T-cell (primary cell): ENCODE measurements at regions of chr7 and their contacts with region 1.

Region 1: DNA sequence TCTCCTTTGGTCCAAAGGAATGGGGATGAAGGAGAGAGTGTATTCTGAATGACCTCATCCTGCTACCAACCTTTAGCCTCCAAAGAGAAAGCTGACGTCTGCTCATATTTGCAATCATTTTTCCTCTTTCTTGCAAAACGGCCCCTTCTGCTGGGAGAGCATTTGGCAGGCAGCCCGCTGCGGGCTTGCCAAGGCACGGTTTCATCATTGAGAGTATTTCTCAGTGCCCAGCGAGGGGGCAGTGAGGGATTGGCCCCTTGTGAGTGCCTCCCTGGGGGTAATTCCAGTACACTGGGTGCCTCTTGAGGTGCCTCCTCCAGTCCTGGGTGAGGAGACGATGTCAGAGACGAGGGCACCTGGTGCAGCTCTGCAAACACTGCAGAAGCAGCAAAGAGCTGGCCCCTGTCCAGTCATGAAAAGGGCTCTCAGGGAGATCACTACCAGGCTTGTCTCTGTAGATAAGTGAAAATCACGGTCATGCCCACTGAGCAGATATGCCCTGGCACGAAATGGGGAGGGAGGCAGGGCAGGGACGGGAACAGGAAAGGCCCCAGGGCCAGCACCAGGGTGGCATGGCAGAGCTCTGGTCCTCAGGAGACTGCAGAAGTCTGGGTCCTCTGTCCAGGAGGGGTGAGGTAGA is 48.7 kb upstream of the SHH start:
- DNase-seq: no peak
- ATAC-seq: no peak
- H3K4me3 ChIP-seq: no peak overlapping the region
- H3K4me3 Mint-ChIP-seq: no peak overlapping the region
- H3K27ac ChIP-seq: no peak overlapping the region
- H3K27ac Mint-ChIP-seq: no peak overlapping the region
- H3K4me1 ChIP-seq: no peaks in the 10 kb centered on the region
- H3K4me1 Mint-ChIP-seq: no peaks in the 10 kb centered on the region
- H3K27me3 ChIP-seq: peaks cover 2 to 40% of the 10 kb centered on the region in 2 experiments
- H3K27me3 Mint-ChIP-seq: peaks cover 8 to 19% of the 10 kb centered on the region in 2 donors

Region 2: GRCh38 chr7:155802906-155803417 is 58.0 kb before region 1 on chr7:
- CTCF ChIA-PET with region 1: no interaction called
- POLR2A ChIA-PET with region 1: interaction called in 1 of 2 experiments, 12 read pairs
- DNase-seq: no peak
- ATAC-seq: no peak
- H3K4me3 ChIP-seq: no peak overlapping the region
- H3K4me3 Mint-ChIP-seq: no peak overlapping the region
- H3K27ac ChIP-seq: no peak overlapping the region
- H3K27ac Mint-ChIP-seq: no peak overlapping the region
- H3K4me1 ChIP-seq: peaks cover 13 to 32% of the 10 kb centered on the region in 2 experiments
- H3K4me1 Mint-ChIP-seq: peaks cover 16 to 33% (median 25%) of the 10 kb centered on the region in 3 donors
- H3K27me3 ChIP-seq: peaks cover 20 to 78% of the 10 kb centered on the region in 2 experiments
- H3K27me3 Mint-ChIP-seq: peaks cover 49 to 73% of the 10 kb centered on the region in 2 donors

Region 3: DNA sequence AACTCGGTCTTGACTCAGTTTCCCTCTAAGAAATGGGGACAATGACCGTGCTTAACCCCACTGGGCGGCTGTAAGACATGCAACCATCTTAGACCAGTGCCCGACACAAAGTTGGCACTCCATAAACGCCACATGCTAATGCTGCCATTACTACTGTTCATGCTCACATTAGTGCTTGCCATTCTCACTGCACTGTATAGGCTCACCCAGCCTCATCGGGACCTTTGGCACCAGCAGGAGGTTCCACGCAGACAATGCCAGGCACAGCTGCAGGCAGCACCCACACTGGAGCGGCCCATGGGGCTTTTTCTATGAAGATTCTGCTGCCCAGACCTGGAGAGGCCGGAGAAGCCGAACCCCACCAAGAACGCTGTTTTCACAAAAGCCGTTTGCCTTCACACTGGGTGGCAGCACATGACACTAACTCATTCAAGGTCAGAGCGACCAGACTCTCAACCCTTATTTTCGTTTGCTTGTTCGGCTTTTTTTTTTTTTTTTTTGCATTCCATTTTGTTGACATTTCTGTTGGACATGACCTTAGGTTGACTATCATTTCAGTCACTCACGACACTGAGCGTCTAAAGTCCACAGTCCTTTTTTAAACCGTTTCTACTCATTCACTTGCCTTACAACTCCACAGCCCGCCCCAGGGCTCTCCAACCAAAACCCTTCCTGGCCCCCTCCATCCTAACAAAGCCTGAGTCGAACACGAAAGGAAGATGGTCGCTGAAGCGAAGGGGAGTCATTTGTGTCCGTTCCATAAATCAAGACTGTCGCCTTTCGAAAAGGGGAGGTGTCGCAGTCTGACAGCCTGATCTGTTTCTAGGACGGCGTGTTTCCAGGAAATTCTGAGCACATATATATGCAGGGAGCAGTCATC is 655.2 kb after region 1 on chr7:
- CTCF ChIA-PET with region 1: no interaction called
- POLR2A ChIA-PET with region 1: no interaction called
- DNase-seq: no peak
- ATAC-seq: no peak
- H3K4me3 ChIP-seq: no peak overlapping the region
- H3K4me3 Mint-ChIP-seq: no peak overlapping the region
- H3K27ac ChIP-seq: no peak overlapping the region
- H3K27ac Mint-ChIP-seq: no peak overlapping the region
- H3K4me1 ChIP-seq: no peaks in the 10 kb centered on the region
- H3K4me1 Mint-ChIP-seq: no peaks in the 10 kb centered on the region
- H3K27me3 ChIP-seq: peaks cover 0 to 25% of the 10 kb centered on the region in 2 experiments
- H3K27me3 Mint-ChIP-seq: peaks cover 9 to 12% of the 10 kb centered on the region in 2 donors